Right ventricle myocardium inferior (tissue), 1 donor: ENCODE measurements at regions of chr12 and their contacts with region 1.

Region 1: GRCh38 chr12:1217191-1217949 is 226.3 kb downstream of the ERC1 start:
- DNase-seq: no peak
- ATAC-seq: peak; percentile 53

Region 2: GRCh38 chr12:1360441-1361211 is 143.3 kb after region 1 on chr12:
- intact Hi-C with region 1: loop called (anchors 10 kb)
- DNase-seq: no peak
- ATAC-seq: no peak